ENCODE measurements at regions of chr14 and their contacts with region 1.

Region 1: DNA sequence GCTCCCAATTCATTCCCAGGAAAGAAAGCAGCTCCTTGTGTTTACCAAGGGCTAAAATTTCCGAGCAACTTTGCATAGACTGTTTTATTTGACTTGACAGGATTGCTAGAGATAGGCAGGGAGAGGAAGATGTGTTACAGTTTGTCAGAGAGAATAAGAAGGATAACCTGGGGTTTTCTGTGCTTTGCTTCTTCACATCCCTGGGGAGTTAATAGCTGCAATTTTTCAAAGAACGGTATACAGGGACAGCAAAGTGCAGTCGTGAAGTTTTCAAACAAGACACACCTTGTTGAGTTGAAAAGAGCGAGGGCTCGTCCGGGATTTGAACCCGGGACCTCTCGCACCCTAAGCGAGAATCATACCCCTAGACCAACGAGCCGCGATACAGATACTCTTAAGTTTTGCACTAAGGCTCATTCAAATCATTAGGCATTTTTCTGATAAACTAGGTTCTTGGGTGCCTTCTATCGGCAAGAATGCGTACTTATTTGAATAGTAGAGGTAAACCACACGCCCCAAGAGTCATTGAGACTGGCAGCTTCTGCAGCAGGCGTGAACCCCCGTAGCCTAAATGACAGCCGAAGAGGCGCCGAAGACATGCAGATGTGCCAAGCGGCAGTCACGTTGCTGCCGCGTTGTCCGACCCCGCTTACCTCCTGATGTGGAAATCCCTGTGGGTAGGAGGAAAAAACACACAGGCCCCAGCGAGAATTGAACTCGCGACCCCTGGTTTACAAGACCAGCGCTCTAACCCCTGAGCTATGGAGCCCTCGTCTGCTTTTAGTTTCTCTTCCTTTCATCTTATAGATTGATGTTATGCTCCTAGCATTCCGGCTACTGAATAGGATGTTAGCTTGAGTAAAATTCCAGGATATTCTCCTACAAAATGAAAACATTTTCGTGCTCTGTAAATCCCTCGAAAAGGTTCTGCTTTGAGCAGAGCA is 22.2 kb upstream of the RNASE12 start:
- DNase-seq: peak; percentile 83 to 96 (median 92)
- ATAC-seq: peak; percentile 85
- H3K4me3 ChIP-seq: peak overlapping the region; percentile 33 to 41
- H3K27ac ChIP-seq: peak overlapping the region; percentile 69 to 85
- H3K4me1 ChIP-seq: peaks cover 3 to 52% of the 10 kb centered on the region in 2 donors
- H3K27me3 ChIP-seq: no peaks in the 10 kb centered on the region
- CTCF ChIP-seq: peak; percentile 48 to 56

Region 2: GRCh38 chr14:20327005-20327869 is 286.1 kb before region 1 on chr14:
- intact Hi-C with region 1: loop called in 1 of 2 experiments (anchors 10 kb)
- DNase-seq: peak in 2 of 4 donors; percentile 52 to 78
- ATAC-seq: peak; percentile 92
- H3K4me3 ChIP-seq: no peak overlapping the region
- H3K27ac ChIP-seq: no peak overlapping the region
- H3K4me1 ChIP-seq: peaks cover 5 to 29% of the 10 kb centered on the region in 2 donors
- H3K27me3 ChIP-seq: no peaks in the 10 kb centered on the region
- CTCF ChIP-seq: peak; percentile 63 to 64

Region 3: DNA sequence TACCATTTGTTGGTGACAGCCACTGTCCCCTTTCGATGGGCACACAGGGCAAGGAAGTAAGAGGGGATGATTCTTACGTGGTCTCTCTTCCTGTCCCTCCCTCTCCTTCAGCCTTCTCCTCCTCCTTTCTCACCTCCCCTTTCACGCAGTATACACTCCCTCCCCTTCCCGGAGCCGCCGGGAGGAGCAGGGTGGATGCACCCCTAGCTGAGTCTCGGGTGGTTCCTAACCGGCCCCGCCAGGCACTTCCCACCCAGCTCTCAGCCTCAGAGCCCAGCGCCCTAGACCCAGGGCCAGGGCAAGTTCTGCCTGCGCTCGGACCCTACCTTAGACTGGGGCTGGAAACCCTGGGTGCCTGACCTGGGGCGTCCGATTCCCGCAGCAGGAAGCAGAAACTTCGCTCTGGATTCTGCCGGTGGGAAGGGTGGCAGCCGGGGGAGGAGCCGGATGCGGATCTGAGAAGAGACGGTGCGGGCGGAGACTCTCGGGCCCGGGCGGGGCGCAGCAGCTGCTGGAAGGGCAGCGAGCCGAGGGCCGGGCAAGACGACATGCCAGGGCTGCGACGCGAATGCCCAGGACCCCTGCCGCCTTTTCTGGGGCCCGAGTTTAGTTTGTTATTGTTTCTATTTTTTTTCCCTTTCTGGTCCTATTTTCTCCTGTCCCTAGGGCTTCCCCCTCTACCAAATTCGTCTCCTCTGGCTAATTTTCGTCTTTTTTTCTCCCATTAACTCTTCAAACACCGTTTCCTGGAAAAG is 200.1 kb before region 1 on chr14 and contains the start of gene TEP1:
- intact Hi-C with region 1: loop called in 1 of 2 experiments (anchors 10 kb)
- DNase-seq: peak; percentile 81 to 97 (median 90)
- ATAC-seq: peak; percentile 97
- H3K4me3 ChIP-seq: peak within 1 kb of the TSS; percentile 73 to 75
- H3K27ac ChIP-seq: peak within 1 kb of the TSS; percentile 96
- H3K4me1 ChIP-seq: peaks cover 0 to 42% of the 10 kb centered on the region in 2 donors
- H3K27me3 ChIP-seq: no peaks in the 10 kb centered on the region
- CTCF ChIP-seq: no peak
- polyA plus RNA-seq, gene TEP1: 19.0 to 25.0 (median 20.5) TPM

Region 4: DNA sequence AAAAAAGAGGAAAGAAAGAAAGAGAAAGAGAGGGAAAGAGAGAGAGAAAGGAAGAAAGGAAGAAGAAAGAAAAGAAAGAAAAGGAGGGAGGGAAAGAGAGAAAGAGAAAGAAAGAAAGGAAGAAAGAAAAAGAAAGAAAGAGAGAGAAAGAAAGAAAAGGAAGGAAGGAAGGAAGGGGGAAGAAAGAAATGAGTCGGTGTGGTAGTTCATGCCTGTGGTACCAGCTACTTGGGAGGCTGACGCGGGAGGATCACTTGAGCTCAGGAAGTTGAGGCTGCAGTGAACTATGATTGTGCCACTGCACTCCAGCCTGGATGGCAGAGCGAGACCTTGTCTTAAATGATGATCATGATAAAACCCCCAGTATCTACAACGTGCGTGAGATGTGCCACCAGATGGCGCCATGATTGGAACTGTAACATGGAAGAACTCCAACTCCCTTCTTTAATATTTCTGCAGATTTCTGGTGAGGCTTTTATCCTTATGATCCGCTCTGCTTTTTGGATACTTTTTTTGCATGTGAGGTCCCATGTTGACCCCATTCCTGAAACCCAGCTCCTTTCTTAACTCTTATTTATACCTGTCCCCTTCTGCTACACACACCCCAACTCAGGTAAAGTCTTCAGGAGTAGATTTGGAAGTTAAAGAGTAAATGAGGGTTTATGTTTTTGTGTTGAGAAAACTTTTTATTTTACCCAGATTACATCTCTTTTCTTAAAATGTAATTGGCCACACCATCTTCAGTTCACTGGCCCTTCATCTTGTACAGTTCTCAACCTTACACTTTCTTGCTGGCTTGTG is 82.4 kb before region 1 on chr14:
- intact Hi-C with region 1: loop called in 1 of 2 experiments (anchors 10 kb)
- DNase-seq: peak; percentile 46 to 75 (median 66)
- ATAC-seq: peak; percentile 85
- H3K4me3 ChIP-seq: no peak overlapping the region
- H3K27ac ChIP-seq: no peak overlapping the region
- H3K4me1 ChIP-seq: peaks cover 0 to 2% of the 10 kb centered on the region in 2 donors
- H3K27me3 ChIP-seq: no peaks in the 10 kb centered on the region
- CTCF ChIP-seq: peak; percentile 70 to 72

Region 5: DNA sequence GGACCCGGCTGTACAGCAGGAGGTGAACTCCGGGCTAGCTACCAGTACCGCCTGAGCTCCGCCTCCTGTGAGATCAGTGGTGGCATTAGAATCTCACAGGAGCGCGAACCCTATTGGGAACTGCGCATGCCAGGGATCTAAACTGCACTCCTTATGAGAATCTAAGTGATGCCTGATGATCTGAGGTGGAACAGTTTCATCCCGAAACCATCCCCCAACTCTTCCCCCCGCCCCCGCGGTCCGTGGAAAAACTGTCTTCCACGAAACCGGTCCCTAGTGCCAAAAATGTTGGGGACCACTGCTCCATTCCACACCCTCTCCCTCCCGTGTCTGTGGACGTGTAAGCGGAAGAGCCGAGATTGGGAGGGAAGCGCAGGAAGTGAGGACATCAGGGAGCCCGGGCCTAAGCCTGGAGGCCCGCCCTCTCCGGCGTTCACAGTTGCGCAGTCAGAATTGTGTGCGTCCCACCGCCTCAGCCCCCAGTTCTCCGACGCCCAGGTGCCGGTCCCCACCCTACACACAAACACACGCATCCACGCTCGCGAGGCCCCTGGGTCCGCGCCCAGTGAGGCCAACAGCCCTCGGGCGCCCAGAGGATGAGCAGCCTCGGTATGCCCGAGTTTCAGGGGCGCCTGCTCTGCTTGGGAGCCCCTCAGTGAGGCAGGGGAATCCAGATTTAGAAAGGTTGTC is 69.2 kb after region 1 on chr14:
- intact Hi-C with region 1: loop called (anchors 5 kb)
- DNase-seq: peak; percentile 92 to 97 (median 94)
- ATAC-seq: peak; percentile 82
- H3K4me3 ChIP-seq: peak overlapping the region; percentile 67 to 77
- H3K27ac ChIP-seq: peak overlapping the region; percentile 99 to 100
- H3K4me1 ChIP-seq: peaks cover 21 to 65% of the 10 kb centered on the region in 2 donors
- H3K27me3 ChIP-seq: no peaks in the 10 kb centered on the region
- CTCF ChIP-seq: no peak

Measured in left lung (tissue), 14 donors.